HepG2 (cell line): ENCODE measurements at regions of chr6 and their contacts with region 1.

Region 1: GRCh38 chr6:143427109-143427817 is 23.2 kb downstream of the ADAT2 start:
- DNase-seq: peak; percentile 69
- ATAC-seq: peak; percentile 100
- H3K4me3 ChIP-seq: no peak overlapping the region
- H3K27ac ChIP-seq: no peak overlapping the region
- H3K4me1 ChIP-seq: peaks cover 14% of the 10 kb centered on the region
- H3K27me3 ChIP-seq: no peaks in the 10 kb centered on the region
- CTCF ChIP-seq: peak; percentile 98
- EP300 ChIP-seq: no peak
- POLR2A ChIP-seq: no peak
- RAD21 ChIP-seq: peak; percentile 99

Region 2: GRCh38 chr6:142474531-142475289 is 952.6 kb before region 1 on chr6:
- CTCF ChIA-PET with region 1: no interaction called
- POLR2A ChIA-PET with region 1: no interaction called
- in situ Hi-C with region 1: no loop called
- intact Hi-C with region 1: loop called (anchors 10 kb)
- DNase-seq: peak; percentile 63
- ATAC-seq: peak; percentile 93
- H3K4me3 ChIP-seq: peak overlapping the region in 2 of 3 experiments; percentile 8 to 26; a peak in 1 of 6 replicates
- H3K27ac ChIP-seq: no peak overlapping the region
- H3K4me1 ChIP-seq: no peaks in the 10 kb centered on the region
- H3K27me3 ChIP-seq: no peaks in the 10 kb centered on the region; a peak in 1 of 5 replicates
- CTCF ChIP-seq: peak; percentile 80
- EP300 ChIP-seq: no peak
- POLR2A ChIP-seq: no peak
- RAD21 ChIP-seq: peak; percentile 76

Region 3: GRCh38 chr6:143060354-143060805 is 366.9 kb before region 1 on chr6:
- CTCF ChIA-PET with region 1: no interaction called
- POLR2A ChIA-PET with region 1: no interaction called
- in situ Hi-C with region 1: no loop called
- intact Hi-C with region 1: loop called (anchors 5 kb)
- DNase-seq: peak; percentile 88
- ATAC-seq: peak; percentile 76
- H3K4me3 ChIP-seq: peak overlapping the region; percentile 68 to 87 (median 85)
- H3K27ac ChIP-seq: peak overlapping the region; percentile 88
- H3K4me1 ChIP-seq: peaks cover 56% of the 10 kb centered on the region
- H3K27me3 ChIP-seq: no peaks in the 10 kb centered on the region; a peak in 1 of 5 replicates
- CTCF ChIP-seq: peak; percentile 78
- EP300 ChIP-seq: 0 out of 4 replicates have a peak, but pooled peaks of 1 of the 2 experiments have one; percentile 33
- POLR2A ChIP-seq: peak; percentile 59 to 69; a peak in 2 of 4 replicates
- RAD21 ChIP-seq: peak; percentile 86

Region 4: DNA sequence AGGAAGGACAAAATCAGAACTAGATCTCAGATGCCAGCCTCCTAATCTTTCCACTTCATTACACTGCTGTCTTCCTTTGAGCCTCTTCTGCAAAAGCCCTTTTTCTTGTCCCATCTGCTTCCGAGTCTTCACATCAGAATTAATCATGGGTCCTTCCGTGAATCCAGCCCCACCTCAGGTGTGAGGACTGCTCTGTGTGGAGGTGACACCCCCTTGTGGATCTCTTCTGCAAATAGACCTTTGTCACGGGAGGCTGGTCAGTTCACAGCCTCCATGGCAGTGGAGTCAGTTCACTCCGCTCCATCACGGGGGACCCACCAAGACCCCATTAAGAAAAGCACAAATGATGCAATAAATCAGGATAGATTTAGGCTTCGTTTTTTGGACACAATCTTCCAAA is 147.9 kb before region 1 on chr6:
- CTCF ChIA-PET with region 1: no interaction called
- POLR2A ChIA-PET with region 1: no interaction called
- in situ Hi-C with region 1: no loop called
- intact Hi-C with region 1: loop called (anchors 2 kb)
- DNase-seq: peak; percentile 34
- ATAC-seq: peak; percentile 98
- H3K4me3 ChIP-seq: no peak overlapping the region
- H3K27ac ChIP-seq: no peak overlapping the region
- H3K4me1 ChIP-seq: no peaks in the 10 kb centered on the region
- H3K27me3 ChIP-seq: no peaks in the 10 kb centered on the region
- CTCF ChIP-seq: peak; percentile 81
- EP300 ChIP-seq: no peak
- POLR2A ChIP-seq: no peak
- RAD21 ChIP-seq: peak; percentile 61

Region 5: GRCh38 chr6:143397229-143398222 is 29.7 kb before region 1 on chr6:
- CTCF ChIA-PET with region 1: no interaction called
- POLR2A ChIA-PET with region 1: no interaction called
- in situ Hi-C with region 1: no loop called
- intact Hi-C with region 1: loop called (anchors 1 kb)
- DNase-seq: peak; percentile 99
- ATAC-seq: peak; percentile 90
- H3K4me3 ChIP-seq: peak overlapping the region; percentile 31 to 68 (median 48)
- H3K27ac ChIP-seq: peak overlapping the region; percentile 90
- H3K4me1 ChIP-seq: peaks cover 58% of the 10 kb centered on the region
- H3K27me3 ChIP-seq: no peaks in the 10 kb centered on the region; a peak in 1 of 5 replicates
- CTCF ChIP-seq: no peak
- EP300 ChIP-seq: peak; percentile 95 to 99
- POLR2A ChIP-seq: peak in 1 of 2 experiments; percentile 75; a peak in 2 of 4 replicates
- RAD21 ChIP-seq: no peak; the same call in 1 of the 2 replicates